Esophagus muscularis mucosa (tissue), 4 donors: ENCODE measurements at regions of chr2 and their contacts with region 1.

Region 1: DNA sequence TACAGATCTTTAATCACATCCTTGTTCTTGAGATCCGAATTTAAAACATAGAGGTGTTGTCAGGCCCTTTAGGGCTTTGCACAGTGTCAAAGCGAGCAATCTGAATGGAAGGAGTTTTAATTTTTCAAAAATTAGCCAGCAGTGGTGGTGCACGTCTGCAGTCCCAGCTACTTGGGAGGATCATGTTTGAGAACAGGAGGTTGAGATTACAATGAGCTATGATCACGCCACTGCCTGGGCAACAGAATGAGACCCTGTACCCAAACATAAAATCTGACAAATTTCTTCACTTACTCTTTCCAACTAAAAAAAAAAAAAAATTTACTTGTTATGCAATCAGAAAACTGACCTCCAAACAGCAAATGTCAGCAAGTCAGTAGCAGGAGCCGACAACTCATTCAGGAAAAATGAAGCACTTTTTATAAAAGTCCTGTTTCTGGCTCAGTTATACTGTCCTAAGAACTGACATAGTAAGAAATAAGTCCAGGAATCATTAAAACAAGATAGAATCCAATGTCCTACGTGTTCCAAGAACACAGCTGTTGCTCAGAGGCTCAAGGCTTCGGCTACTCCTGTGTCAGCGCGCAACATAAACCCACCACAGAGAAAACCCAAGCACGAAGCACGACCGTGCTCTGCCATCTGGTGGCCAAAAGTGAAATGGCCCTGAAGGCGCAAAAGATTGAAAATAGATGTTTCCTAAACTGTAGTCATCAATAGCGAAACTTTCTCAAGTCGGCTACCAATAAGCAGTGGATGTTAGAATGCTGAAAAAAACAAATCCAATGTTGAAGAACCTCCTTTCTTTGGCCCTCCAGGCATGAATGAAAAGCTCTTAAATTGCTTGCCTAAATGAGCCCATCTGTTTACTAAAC is 138.1 kb downstream of the INO80D start:
- DNase-seq: peak; percentile 94
- H3K4me3 ChIP-seq: peak overlapping the region in 3 of 4 donors; percentile 16 to 21 (median 19)
- H3K27ac ChIP-seq: peak overlapping the region; percentile 11 to 53 (median 48)
- H3K4me1 ChIP-seq: peaks cover 0 to 16% (median 11%) of the 10 kb centered on the region in 4 donors
- H3K27me3 ChIP-seq: no peaks in the 10 kb centered on the region
- CTCF ChIP-seq: peak; percentile 87 to 96 (median 95)
- EP300 ChIP-seq: no peak
- POLR2A ChIP-seq: no peak

Region 2: DNA sequence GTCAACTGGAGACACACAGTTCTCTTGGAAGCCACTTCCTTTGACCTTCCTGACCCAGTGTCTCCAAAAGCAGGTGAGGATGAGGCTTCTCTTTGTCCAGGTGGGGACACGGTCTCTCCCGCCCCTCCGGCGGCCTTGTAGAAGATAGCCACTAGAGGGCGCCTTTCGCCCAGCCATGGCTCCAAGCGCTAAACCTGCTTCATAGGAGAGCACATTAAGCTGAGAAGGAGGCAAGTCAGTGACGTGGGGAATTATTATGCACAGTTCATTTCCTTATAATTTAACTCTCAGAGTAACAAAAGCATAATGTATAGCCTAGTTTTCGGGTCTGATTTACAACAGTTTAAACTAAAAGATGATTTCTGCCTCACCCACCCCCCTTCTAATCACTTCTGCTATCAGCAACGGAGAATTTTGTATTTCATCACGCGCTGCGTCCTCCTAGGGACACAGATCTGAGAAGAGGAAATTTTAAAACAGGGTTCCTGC is 1802.6 kb before region 1 on chr2:
- intact Hi-C with region 1: loop called (anchors 5 kb)
- DNase-seq: no peak
- H3K4me3 ChIP-seq: peak overlapping the region; percentile 30 to 52 (median 41)
- H3K27ac ChIP-seq: no peak overlapping the region
- H3K4me1 ChIP-seq: peaks cover 0 to 11% (median 0%) of the 10 kb centered on the region in 4 donors
- H3K27me3 ChIP-seq: no peaks in the 10 kb centered on the region
- CTCF ChIP-seq: peak; percentile 83 to 94 (median 88)
- EP300 ChIP-seq: no peak
- POLR2A ChIP-seq: no peak

Region 3: GRCh38 chr2:204260162-204260877 is 1687.5 kb before region 1 on chr2:
- intact Hi-C with region 1: loop called (anchors 10 kb)
- DNase-seq: no peak
- H3K4me3 ChIP-seq: no peak overlapping the region
- H3K27ac ChIP-seq: no peak overlapping the region
- H3K4me1 ChIP-seq: peaks cover 0 to 22% (median 21%) of the 10 kb centered on the region in 4 donors
- H3K27me3 ChIP-seq: no peaks in the 10 kb centered on the region
- CTCF ChIP-seq: peak; percentile 78 to 82 (median 80)
- EP300 ChIP-seq: no peak
- POLR2A ChIP-seq: no peak

Region 4: GRCh38 chr2:205776139-205776538 is 171.7 kb before region 1 on chr2:
- intact Hi-C with region 1: loop called (anchors 10 kb)
- DNase-seq: no peak
- H3K4me3 ChIP-seq: no peak overlapping the region
- H3K27ac ChIP-seq: peak overlapping the region; percentile 80 to 98 (median 90)
- H3K4me1 ChIP-seq: peaks cover 0 to 100% (median 95%) of the 10 kb centered on the region in 4 donors
- H3K27me3 ChIP-seq: no peaks in the 10 kb centered on the region
- CTCF ChIP-seq: peak; percentile 37 to 67 (median 49)
- EP300 ChIP-seq: no peak
- POLR2A ChIP-seq: no peak